ENCODE measurements at regions of chr5 and their contacts with region 1.

Region 1: GRCh38 chr5:157148734-157149615 is 6.3 kb upstream of the MED7 start:
- DNase-seq: peak; percentile 95
- H3K4me3 Mint-ChIP-seq: peak overlapping the region; percentile 37
- H3K27ac Mint-ChIP-seq: peak overlapping the region; percentile 83
- H3K4me1 Mint-ChIP-seq: peaks cover 46% of the 10 kb centered on the region
- H3K27me3 Mint-ChIP-seq: no peaks in the 10 kb centered on the region

Region 2: GRCh38 chr5:157167214-157167621 is 18.2 kb after region 1 on chr5:
- intact Hi-C with region 1: loop called (anchors 1 kb)
- DNase-seq: peak; percentile 78
- H3K4me3 Mint-ChIP-seq: peak overlapping the region; percentile 75
- H3K27ac Mint-ChIP-seq: peak overlapping the region; percentile 91
- H3K4me1 Mint-ChIP-seq: peaks cover 80% of the 10 kb centered on the region
- H3K27me3 Mint-ChIP-seq: no peaks in the 10 kb centered on the region

Region 3: DNA sequence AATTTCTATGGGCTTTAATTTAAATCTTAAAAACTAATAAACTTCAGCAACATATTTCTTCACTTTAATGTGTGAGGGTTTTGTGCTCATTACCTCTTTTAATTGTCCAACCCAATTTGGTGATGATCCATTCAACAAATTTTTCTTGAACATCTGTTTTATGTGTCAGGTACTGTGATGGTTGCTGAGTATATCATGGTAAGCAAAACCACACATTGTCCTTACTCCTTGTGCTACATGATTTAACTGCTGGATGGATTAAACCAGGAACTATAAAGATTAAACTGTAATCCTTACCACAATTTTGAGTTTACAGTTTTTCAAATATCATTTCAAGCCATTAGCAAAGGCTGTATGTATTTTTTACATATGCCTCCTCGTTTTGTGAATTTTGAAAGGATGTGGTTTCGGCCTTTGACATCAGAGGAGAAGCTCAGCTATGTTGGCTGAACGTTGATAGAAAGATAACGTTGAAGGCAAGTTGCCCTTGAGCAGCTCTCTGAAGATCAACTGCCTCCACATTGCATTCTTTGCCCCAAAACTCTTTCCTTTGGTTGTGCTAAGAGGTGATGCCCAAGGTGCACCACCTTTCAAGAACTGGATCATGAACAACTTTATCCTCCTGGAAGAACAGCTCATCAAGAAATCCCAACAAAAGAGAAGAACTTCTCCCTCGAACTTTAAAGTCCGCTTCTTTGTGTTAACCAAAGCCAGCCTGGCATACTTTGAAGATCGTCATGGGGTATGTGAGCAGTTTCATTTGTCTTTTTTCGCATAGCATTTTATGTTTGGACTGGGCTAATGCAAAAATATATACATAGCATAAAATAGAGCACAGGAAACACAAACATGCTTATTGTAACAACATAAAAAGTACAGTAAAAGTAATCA is 31.6 kb after region 1 on chr5 and contains the start of gene ITK:
- intact Hi-C with region 1: loop called (anchors 5 kb)
- DNase-seq: peak; percentile 89
- H3K4me3 Mint-ChIP-seq: peak within 1 kb of the TSS; percentile 98
- H3K27ac Mint-ChIP-seq: peak within 1 kb of the TSS; percentile 99
- H3K4me1 Mint-ChIP-seq: peaks cover 40% of the 10 kb centered on the region
- H3K27me3 Mint-ChIP-seq: no peaks in the 10 kb centered on the region
- total RNA-seq, gene ITK: 230 and 237 TPM in 2 replicates

Region 4: DNA sequence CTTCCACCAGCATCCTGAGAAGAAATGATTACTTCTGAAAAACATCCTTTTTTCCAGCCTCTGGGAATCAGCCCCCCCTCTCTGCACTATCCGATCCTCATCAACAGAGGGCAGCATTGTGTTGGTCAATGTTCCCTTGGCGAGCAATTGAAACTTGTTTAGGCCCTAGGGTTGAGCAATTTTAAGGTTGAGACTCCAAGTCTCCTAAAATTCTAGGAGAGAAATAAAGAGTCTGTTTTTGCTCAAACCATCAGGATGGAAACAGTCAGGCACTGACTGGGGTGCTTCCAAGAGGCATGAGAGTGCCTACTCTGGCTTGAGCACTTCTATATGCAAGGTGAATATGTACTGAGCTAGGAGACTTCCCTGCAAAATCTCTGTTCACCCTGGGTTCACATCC is 104.6 kb after region 1 on chr5:
- intact Hi-C with region 1: loop called (anchors 1 kb)
- DNase-seq: no peak
- H3K4me3 Mint-ChIP-seq: peak overlapping the region; percentile 61
- H3K27ac Mint-ChIP-seq: peak overlapping the region; percentile 93
- H3K4me1 Mint-ChIP-seq: peaks cover 82% of the 10 kb centered on the region
- H3K27me3 Mint-ChIP-seq: no peaks in the 10 kb centered on the region

Region 5: GRCh38 chr5:157283434-157283833 is 134.5 kb after region 1 on chr5:
- intact Hi-C with region 1: no loop called
- DNase-seq: peak; percentile 80
- H3K4me3 Mint-ChIP-seq: peak overlapping the region; percentile 61
- H3K27ac Mint-ChIP-seq: peak overlapping the region; percentile 81
- H3K4me1 Mint-ChIP-seq: peaks cover 70% of the 10 kb centered on the region
- H3K27me3 Mint-ChIP-seq: no peaks in the 10 kb centered on the region

Region 6: DNA sequence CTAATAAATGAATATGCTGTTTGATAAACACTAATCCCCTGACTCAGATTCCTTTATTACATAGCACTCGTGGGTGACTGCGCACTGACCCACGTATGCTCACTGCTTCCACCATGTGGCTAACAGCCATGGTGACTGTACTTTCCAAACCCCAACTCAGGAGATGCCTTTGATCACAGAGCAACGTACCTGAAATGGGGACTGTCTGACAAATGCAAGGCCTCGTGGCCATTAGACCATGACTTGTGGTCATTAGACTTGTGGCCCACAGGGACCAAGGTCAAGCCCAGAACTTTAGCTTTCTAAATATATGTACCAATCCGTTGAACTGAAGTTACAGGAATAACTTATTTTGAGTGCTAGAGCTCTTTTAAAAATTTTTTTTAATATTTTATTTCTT is 163.5 kb after region 1 on chr5:
- intact Hi-C with region 1: loop called (anchors 1 kb)
- DNase-seq: peak; percentile 87
- H3K4me3 Mint-ChIP-seq: no peak overlapping the region
- H3K27ac Mint-ChIP-seq: peak overlapping the region; percentile 86
- H3K4me1 Mint-ChIP-seq: peaks cover 22% of the 10 kb centered on the region
- H3K27me3 Mint-ChIP-seq: no peaks in the 10 kb centered on the region

Measured in activated CD4-positive, alpha-beta T cell treated with anti-CD3 and anti-CD28 coated beads, Interleukin-2, amount 10 ng/mL, durations not matched to agents 24 days and 14 days (primary cell).